GM12878 (cell line): ENCODE measurements at regions of chr22 and their contacts with region 1.

Region 1: GRCh38 chr22:24156913-24157821 is 24.1 kb upstream of the SUSD2 start:
- DNase-seq: peak; percentile 78
- ATAC-seq: peak; percentile 92
- H3K4me3 ChIP-seq: peak overlapping the region; percentile 62
- H3K27ac ChIP-seq: peak overlapping the region; percentile 98
- H3K4me1 ChIP-seq: peaks cover 34% of the 10 kb centered on the region
- H3K27me3 ChIP-seq: no peaks in the 10 kb centered on the region
- CTCF ChIP-seq: peak; percentile 88 to 98 (median 95)
- EP300 ChIP-seq: peak in 1 of 2 experiments; percentile 57; a peak in 2 of 4 replicates
- POLR2A ChIP-seq: peak; percentile 79
- RAD21 ChIP-seq: peak; percentile 18; the same call in 1 of the 2 replicates

Region 2: GRCh38 chr22:23767673-23768548 is 389.3 kb before region 1 on chr22 and contains the start of gene CHCHD10:
- CTCF ChIA-PET with region 1: no interaction called
- POLR2A ChIA-PET with region 1: no interaction called
- RAD21 ChIA-PET with region 1: no interaction called
- SMC1A ChIA-PET with region 1: no interaction called
- in situ Hi-C with region 1: no loop called
- intact Hi-C with region 1: no loop called
- DNase-seq: no peak
- ATAC-seq: peak; percentile 76
- H3K4me3 ChIP-seq: peak within 1 kb of the TSS; percentile 74
- H3K27ac ChIP-seq: peak within 1 kb of the TSS; percentile 83
- H3K4me1 ChIP-seq: peaks cover 33% of the 10 kb centered on the region
- H3K27me3 ChIP-seq: no peaks in the 10 kb centered on the region
- CTCF ChIP-seq: peak; percentile 59 to 80 (median 75)
- EP300 ChIP-seq: no peak
- POLR2A ChIP-seq: peak; percentile 89
- RAD21 ChIP-seq: peak; percentile 53
- polyA plus RNA-seq, gene CHCHD10: 13.2 to 216 TPM

Region 3: GRCh38 chr22:24005201-24005600 is 152.0 kb before region 1 on chr22 and contains the start of gene GSTT4:
- CTCF ChIA-PET with region 1: interaction called, 12 read pairs
- POLR2A ChIA-PET with region 1: interaction called, 7 read pairs
- RAD21 ChIA-PET with region 1: interaction called, 12 read pairs
- SMC1A ChIA-PET with region 1: interaction called, 6 read pairs
- in situ Hi-C with region 1: no loop called
- intact Hi-C with region 1: no loop called
- DNase-seq: no peak
- ATAC-seq: no peak
- H3K4me3 ChIP-seq: no peak within 1 kb of the TSS
- H3K27ac ChIP-seq: no peak within 1 kb of the TSS
- H3K4me1 ChIP-seq: no peaks in the 10 kb centered on the region
- H3K27me3 ChIP-seq: no peaks in the 10 kb centered on the region
- CTCF ChIP-seq: no peak
- EP300 ChIP-seq: no peak
- POLR2A ChIP-seq: no peak
- RAD21 ChIP-seq: no peak
- polyA plus RNA-seq, gene GSTT4: not detected

Region 4: DNA sequence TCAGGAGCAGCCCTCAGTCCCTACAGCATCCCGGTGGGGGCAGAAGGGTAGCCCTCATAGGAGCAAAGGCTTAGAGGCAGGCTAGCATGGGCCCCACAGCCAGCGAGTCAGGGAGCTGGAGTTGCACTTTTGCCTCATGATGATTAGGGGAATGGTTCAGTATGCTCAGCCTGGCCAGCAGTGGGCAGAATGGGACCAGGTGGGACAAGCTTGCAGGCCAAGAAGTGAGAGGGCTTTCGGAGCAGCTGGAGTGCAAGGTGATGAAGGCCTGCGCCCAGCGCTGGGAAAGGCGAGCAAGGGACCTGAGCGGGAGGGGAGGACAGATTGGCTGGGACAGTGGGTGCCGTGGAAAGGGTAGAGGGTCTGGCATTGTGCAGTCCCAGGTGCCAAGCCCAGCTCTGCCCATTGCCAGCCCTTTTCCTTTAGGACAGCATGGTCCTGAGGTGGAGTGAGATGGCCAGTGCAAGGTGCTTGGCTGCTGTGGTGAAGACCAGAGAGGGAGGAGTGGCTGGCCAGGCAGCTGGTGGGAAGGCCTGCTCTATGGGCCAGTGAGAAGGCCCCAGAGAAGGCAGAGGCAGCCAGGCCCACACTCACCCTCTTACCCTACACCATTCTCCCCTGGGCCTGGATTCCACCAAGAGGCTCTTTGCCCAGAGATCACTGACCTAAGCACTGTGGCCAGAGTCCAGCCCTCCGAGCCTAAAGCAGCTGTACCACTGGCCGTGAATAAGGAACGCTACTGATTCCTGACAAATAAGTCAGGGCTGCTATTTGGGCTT is 23.8 kb before region 1 on chr22:
- CTCF ChIA-PET with region 1: interaction called, 17 read pairs
- POLR2A ChIA-PET with region 1: interaction called, 3 read pairs
- RAD21 ChIA-PET with region 1: no interaction called
- SMC1A ChIA-PET with region 1: no interaction called
- in situ Hi-C with region 1: no loop called
- intact Hi-C with region 1: no loop called
- DNase-seq: no peak
- ATAC-seq: no peak; the same call in 2 of the 3 replicates
- H3K4me3 ChIP-seq: no peak overlapping the region
- H3K27ac ChIP-seq: no peak overlapping the region
- H3K4me1 ChIP-seq: no peaks in the 10 kb centered on the region; the same call in 1 of the 2 replicates
- H3K27me3 ChIP-seq: no peaks in the 10 kb centered on the region
- CTCF ChIP-seq: peak in 2 of 3 experiments; percentile 25 to 26; a peak in 2 of 6 replicates
- EP300 ChIP-seq: no peak
- POLR2A ChIP-seq: no peak
- RAD21 ChIP-seq: peak; percentile 47

Region 5: DNA sequence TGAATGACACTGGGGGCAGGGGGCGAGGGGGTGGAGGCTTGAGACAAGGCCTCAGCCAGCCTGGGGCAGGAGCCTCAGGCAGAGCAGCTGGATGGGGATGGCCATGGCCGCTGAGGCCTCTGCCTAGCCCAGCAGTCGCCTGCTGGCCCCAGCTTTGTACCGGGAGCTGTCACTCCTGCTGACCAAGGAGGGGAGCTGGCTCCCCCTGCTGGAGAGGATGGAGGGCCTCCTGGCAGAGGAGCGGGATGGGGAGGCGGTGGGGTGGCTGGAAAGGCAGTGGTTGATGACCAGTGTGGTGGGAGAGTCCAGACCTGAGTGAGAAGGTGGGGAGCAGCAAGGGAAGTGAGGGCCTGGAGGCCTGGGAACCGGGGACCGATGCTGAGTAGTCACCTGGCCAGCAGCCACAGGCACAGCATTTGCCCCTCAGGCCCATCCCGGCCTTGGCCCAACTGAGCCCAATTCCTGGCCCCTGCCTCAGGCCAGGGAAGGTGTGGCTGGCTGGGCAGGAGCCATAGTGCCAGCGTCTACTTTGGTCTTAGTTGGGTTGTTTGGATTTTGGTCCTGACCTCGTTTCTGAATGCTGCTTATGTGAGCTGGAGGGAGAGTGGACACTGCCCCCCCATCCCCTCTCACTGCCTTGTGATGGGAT is 18.1 kb after region 1 on chr22:
- CTCF ChIA-PET with region 1: interaction called, 94 read pairs
- POLR2A ChIA-PET with region 1: interaction called, 7 read pairs
- RAD21 ChIA-PET with region 1: interaction called, 16 read pairs
- SMC1A ChIA-PET with region 1: interaction called, 9 read pairs
- in situ Hi-C with region 1: no loop called
- intact Hi-C with region 1: loop called (anchors 2 kb)
- DNase-seq: no peak
- ATAC-seq: peak; percentile 87
- H3K4me3 ChIP-seq: no peak overlapping the region
- H3K27ac ChIP-seq: no peak overlapping the region
- H3K4me1 ChIP-seq: no peaks in the 10 kb centered on the region
- H3K27me3 ChIP-seq: no peaks in the 10 kb centered on the region
- CTCF ChIP-seq: peak; percentile 72 to 92 (median 80)
- EP300 ChIP-seq: no peak
- POLR2A ChIP-seq: no peak
- RAD21 ChIP-seq: peak; percentile 89

Region 6: GRCh38 chr22:24230911-24231656 is 73.9 kb after region 1 on chr22:
- CTCF ChIA-PET with region 1: interaction called, 21 read pairs
- POLR2A ChIA-PET with region 1: no interaction called
- RAD21 ChIA-PET with region 1: interaction called, 9 read pairs
- SMC1A ChIA-PET with region 1: interaction called, 3 read pairs
- in situ Hi-C with region 1: no loop called
- intact Hi-C with region 1: no loop called
- DNase-seq: no peak
- ATAC-seq: peak; percentile 95
- H3K4me3 ChIP-seq: no peak overlapping the region
- H3K27ac ChIP-seq: no peak overlapping the region
- H3K4me1 ChIP-seq: no peaks in the 10 kb centered on the region
- H3K27me3 ChIP-seq: no peaks in the 10 kb centered on the region
- CTCF ChIP-seq: peak; percentile 46 to 64 (median 56); a peak in 5 of 6 replicates
- EP300 ChIP-seq: no peak
- POLR2A ChIP-seq: no peak
- RAD21 ChIP-seq: peak; percentile 40